ENCODE measurements at regions of chr22 and their contacts with region 1.

Region 1: DNA sequence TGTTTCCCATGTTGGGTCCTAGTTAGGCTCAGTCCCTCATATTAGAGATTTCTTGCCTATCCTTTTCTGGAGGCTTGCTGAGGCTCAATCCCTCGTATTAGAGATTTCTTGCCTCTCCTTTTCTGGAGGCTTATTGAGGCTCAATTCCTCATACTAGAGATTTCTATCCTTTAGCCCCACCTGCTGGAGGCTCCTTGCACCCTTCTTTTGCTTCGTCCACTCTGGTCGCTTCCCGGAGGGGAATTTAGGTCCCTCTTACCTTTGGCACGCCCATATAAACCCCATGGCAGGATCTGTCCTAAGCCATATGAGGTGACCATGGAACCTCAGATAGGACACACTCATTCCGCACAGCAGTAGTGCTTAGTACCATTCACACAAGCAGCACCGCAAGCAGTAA is 15.9 kb downstream of the CYP2D6 start:
- DNase-seq: no peak
- ATAC-seq: peak in 2 of 4 donors; percentile 32 to 73
- H3K4me3 ChIP-seq: no peak overlapping the region
- H3K27ac ChIP-seq: no peak overlapping the region
- H3K4me1 ChIP-seq: peaks cover 7% of the 10 kb centered on the region
- H3K27me3 ChIP-seq: no peaks in the 10 kb centered on the region
- CTCF ChIP-seq: peak; percentile 28

Region 2: DNA sequence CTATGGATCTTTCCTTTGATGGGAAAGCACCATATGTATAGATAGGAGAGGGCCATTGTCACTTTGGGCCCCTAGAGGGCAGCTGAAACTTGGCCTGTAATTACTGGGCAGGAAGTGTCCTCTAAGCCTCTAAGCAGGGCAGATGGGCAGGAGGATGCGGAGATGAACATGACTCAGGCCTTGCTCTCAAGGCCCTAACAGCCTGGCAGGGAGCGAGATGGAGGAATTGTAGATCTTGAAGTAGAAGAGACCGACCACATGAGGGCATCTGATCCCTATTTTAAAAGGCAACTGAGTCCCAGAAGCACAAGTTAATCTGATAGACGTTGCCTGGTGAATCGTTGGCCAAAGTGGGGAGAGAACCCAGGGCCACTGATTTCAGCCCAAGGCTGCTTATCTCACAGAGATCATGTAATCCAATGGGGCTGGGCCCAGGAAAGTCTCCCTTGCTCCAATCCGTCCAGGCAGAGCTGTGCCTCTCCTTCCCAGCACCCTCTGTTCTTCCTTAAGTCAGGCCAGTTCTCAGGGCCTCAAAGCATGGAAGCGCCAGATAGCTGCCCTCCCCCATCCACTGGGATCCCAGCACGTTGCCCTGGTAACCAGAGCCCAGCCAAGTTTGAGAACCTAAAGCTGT is 148.0 kb before region 1 on chr22:
- intact Hi-C with region 1: loop called in 1 of 2 experiments (anchors 5 kb)
- DNase-seq: no peak
- ATAC-seq: peak; percentile 34 to 66 (median 60)
- H3K4me3 ChIP-seq: no peak overlapping the region
- H3K27ac ChIP-seq: no peak overlapping the region
- H3K4me1 ChIP-seq: no peaks in the 10 kb centered on the region
- H3K27me3 ChIP-seq: peaks cover 0 to 4% (median 2%) of the 10 kb centered on the region in 3 donors
- CTCF ChIP-seq: peak; percentile 15

Region 3: GRCh38 chr22:42090596-42091454 is 23.9 kb before region 1 on chr22 and contains the start of gene NDUFA6:
- intact Hi-C with region 1: loop called in 1 of 2 experiments (anchors 2 kb)
- DNase-seq: peak; percentile 99
- ATAC-seq: peak; percentile 92 to 96 (median 95)
- H3K4me3 ChIP-seq: peak within 1 kb of the TSS; percentile 93
- H3K27ac ChIP-seq: peak within 1 kb of the TSS; percentile 98
- H3K4me1 ChIP-seq: peaks cover 23% of the 10 kb centered on the region
- H3K27me3 ChIP-seq: no peaks in the 10 kb centered on the region
- CTCF ChIP-seq: peak; percentile 93
- total RNA-seq, gene NDUFA6: 149 to 181 (median 160) TPM

Measured in psoas muscle (tissue), 8 donors.